GM12878 (cell line): ENCODE measurements at regions of chr5 and their contacts with region 1.

Region 1: GRCh38 chr5:95956021-95956899 is 5.4 kb downstream of the ELL2 start:
- DNase-seq: no peak
- ATAC-seq: peak; percentile 10; the same call in 1 of the 3 replicates
- H3K4me3 ChIP-seq: peak overlapping the region; percentile 46; the same call in 1 of the 2 replicates
- H3K27ac ChIP-seq: peak overlapping the region; percentile 6; the same call in 1 of the 2 replicates
- H3K4me1 ChIP-seq: 0 out of 2 replicates have a peak, but pooled peaks cover 3% of the 10 kb centered on the region
- H3K27me3 ChIP-seq: no peaks in the 10 kb centered on the region
- CTCF ChIP-seq: no peak
- EP300 ChIP-seq: no peak
- POLR2A ChIP-seq: no peak
- RAD21 ChIP-seq: no peak

Region 2: GRCh38 chr5:95892780-95893354 is 63.4 kb before region 1 on chr5:
- CTCF ChIA-PET with region 1: interaction called, 15 read pairs
- POLR2A ChIA-PET with region 1: interaction called, 6 read pairs
- RAD21 ChIA-PET with region 1: interaction called, 10 read pairs
- SMC1A ChIA-PET with region 1: interaction called, 31 read pairs
- in situ Hi-C with region 1: no loop called
- intact Hi-C with region 1: loop called (anchors 2 kb)
- DNase-seq: no peak
- ATAC-seq: peak; percentile 94
- H3K4me3 ChIP-seq: no peak overlapping the region
- H3K27ac ChIP-seq: no peak overlapping the region
- H3K4me1 ChIP-seq: no peaks in the 10 kb centered on the region
- H3K27me3 ChIP-seq: no peaks in the 10 kb centered on the region
- CTCF ChIP-seq: peak; percentile 57 to 62 (median 57)
- EP300 ChIP-seq: no peak
- POLR2A ChIP-seq: no peak
- RAD21 ChIP-seq: peak; percentile 81

Region 3: DNA sequence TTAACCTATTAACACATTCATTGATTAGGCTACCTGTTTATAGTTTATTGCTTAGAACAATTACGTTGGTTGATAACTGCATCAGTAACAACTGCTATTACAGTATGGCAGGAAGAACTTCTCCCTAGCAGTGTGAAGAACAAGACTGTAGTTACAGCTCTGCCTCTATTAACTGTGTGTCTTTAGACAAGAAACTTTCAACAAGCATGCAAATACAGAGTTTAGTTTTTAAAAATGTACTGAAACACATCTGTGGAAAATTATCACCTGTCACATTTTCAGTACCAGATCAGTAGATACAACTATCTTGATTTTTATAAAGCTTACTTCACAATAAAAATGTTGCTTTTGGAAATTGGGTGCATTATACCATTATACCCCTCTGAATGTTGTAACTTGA is 16.8 kb before region 1 on chr5:
- CTCF ChIA-PET with region 1: interaction called, 33 read pairs
- POLR2A ChIA-PET with region 1: interaction called, 11 read pairs
- RAD21 ChIA-PET with region 1: interaction called, 17 read pairs
- SMC1A ChIA-PET with region 1: interaction called, 51 read pairs
- in situ Hi-C with region 1: no loop called
- intact Hi-C with region 1: no loop called
- DNase-seq: no peak
- ATAC-seq: peak; percentile 53
- H3K4me3 ChIP-seq: 0 out of 2 replicates have a peak overlapping the region, but pooled peaks have one; percentile 0
- H3K27ac ChIP-seq: peak overlapping the region; percentile 62
- H3K4me1 ChIP-seq: peaks cover 26% of the 10 kb centered on the region
- H3K27me3 ChIP-seq: no peaks in the 10 kb centered on the region
- CTCF ChIP-seq: no peak
- EP300 ChIP-seq: no peak
- POLR2A ChIP-seq: no peak
- RAD21 ChIP-seq: no peak

Region 4: GRCh38 chr5:95973793-95974325 is 17.6 kb after region 1 on chr5:
- CTCF ChIA-PET with region 1: interaction called, 32 read pairs
- POLR2A ChIA-PET with region 1: interaction called, 13 read pairs
- RAD21 ChIA-PET with region 1: interaction called, 41 read pairs
- SMC1A ChIA-PET with region 1: interaction called, 55 read pairs
- in situ Hi-C with region 1: no loop called
- intact Hi-C with region 1: no loop called
- DNase-seq: peak; percentile 87
- ATAC-seq: peak; percentile 99
- H3K4me3 ChIP-seq: no peak overlapping the region
- H3K27ac ChIP-seq: no peak overlapping the region; the same call in 1 of the 2 replicates
- H3K4me1 ChIP-seq: peaks cover 10% of the 10 kb centered on the region
- H3K27me3 ChIP-seq: no peaks in the 10 kb centered on the region
- CTCF ChIP-seq: no peak
- EP300 ChIP-seq: peak; percentile 52 to 71; a peak in 3 of 4 replicates
- POLR2A ChIP-seq: no peak
- RAD21 ChIP-seq: no peak